ENCODE measurements at regions of chr2 and their contacts with region 1.

Region 1: GRCh38 chr2:128736689-128737545 is 418.2 kb upstream of the HS6ST1 start:
- DNase-seq: peak; percentile 76
- ATAC-seq: peak; percentile 72
- H3K4me3 Mint-ChIP-seq: peak overlapping the region; percentile 46
- H3K27ac Mint-ChIP-seq: no peak overlapping the region
- H3K4me1 Mint-ChIP-seq: peaks cover 15% of the 10 kb centered on the region
- H3K27me3 Mint-ChIP-seq: peaks cover 18% of the 10 kb centered on the region
- CTCF ChIP-seq: peak; percentile 97

Region 2: GRCh38 chr2:128879161-128879560 is 142.2 kb after region 1 on chr2:
- CTCF ChIA-PET with region 1: no interaction called
- POLR2A ChIA-PET with region 1: no interaction called
- intact Hi-C with region 1: no loop called
- DNase-seq: no peak
- ATAC-seq: no peak
- H3K4me3 Mint-ChIP-seq: no peak overlapping the region
- H3K27ac Mint-ChIP-seq: no peak overlapping the region
- H3K4me1 Mint-ChIP-seq: no peaks in the 10 kb centered on the region
- H3K27me3 Mint-ChIP-seq: peaks cover 2% of the 10 kb centered on the region
- CTCF ChIP-seq: no peak

Region 3: DNA sequence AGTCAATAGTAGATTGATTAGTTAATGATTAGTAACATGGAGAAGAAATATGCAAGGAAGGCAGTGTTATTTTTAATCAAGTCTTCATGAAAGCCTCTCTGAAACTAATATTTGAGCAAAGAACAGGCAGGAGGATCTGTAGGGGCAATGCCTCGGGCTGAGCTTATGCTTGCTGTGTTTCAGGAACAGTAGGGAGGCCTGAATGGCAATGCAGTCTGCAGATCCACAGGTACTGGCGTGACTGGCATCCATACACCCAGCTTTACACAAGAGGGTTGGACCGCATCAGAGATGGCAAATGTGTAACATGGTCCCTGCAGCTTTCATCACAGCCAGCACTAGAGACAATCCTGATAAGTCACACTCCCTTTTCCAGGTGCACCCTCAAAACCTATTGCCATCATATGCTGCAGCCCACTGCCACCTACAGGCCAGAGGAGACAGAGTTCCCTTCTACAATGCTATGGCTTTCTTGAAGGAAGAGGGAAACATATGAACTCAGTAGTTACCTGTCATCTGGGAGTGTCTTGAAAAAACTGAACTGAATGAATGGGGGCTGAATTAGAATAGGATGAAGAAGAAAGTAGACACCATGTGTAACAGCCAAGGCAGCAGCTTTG is 660.2 kb after region 1 on chr2:
- CTCF ChIA-PET with region 1: no interaction called
- POLR2A ChIA-PET with region 1: no interaction called
- intact Hi-C with region 1: loop called (anchors 10 kb)
- DNase-seq: peak; percentile 31
- ATAC-seq: no peak
- H3K4me3 Mint-ChIP-seq: no peak overlapping the region
- H3K27ac Mint-ChIP-seq: no peak overlapping the region
- H3K4me1 Mint-ChIP-seq: no peaks in the 10 kb centered on the region
- H3K27me3 Mint-ChIP-seq: no peaks in the 10 kb centered on the region
- CTCF ChIP-seq: peak; percentile 16